ENCODE measurements at regions of chr12 and their contacts with region 1.

Region 1: GRCh38 chr12:54032627-54033100 is at the start of gene HOXC5:
- DNase-seq: peak; percentile 87 to 92
- ATAC-seq: peak; percentile 40 to 59
- H3K4me3 ChIP-seq: peak within 1 kb of the TSS; percentile 56
- H3K27ac ChIP-seq: peak within 1 kb of the TSS; percentile 76 to 93
- H3K4me1 ChIP-seq: peaks cover 18% of the 10 kb centered on the region
- CTCF ChIP-seq: peak; percentile 98
- EP300 ChIP-seq: no peak
- POLR2A ChIP-seq: no peak
- RAD21 ChIP-seq: peak; percentile 92 to 94
- polyA plus RNA-seq, gene HOXC5: 0.41 and 0.49 TPM in 2 replicates

Region 2: DNA sequence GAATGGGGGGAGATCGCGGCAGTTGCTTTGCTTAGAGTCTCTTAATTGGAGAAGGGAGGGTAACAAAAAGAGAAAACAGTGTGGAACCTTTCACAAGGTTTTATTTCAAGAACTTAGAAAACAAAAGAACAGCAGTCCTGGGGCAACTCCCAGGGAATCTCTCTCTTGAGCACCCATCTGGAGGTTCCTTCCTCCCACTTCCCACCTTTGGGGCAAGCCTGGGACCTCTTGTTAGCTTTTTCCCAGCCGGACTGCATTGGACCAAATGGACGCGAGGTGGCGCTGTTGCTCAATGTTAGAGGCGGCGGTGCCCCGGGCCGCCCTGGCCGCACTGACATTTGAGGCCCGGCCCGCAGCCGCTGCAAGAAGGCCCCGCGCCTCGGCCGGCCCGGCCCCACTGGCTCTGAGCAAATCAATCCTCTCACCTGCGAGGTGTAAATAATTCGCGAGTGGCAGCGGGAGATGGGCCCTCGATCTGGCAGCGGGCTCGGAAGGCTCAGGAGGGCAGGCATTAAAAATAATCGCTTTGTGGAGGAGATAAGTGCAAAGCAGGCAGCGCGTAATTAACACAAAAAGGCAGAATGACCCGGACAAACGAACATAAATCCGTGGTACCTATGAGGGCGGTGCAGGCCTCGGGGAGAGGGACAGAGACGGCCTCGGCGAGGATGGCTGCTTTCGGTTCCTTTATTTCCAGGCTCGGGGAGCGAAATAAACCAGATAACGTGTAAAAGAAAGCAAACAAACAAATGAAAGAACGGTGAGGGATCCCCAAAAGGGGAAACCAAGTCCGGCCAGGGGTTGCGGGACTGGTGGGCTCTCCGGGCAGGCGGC is 26.6 kb before region 1 on chr12:
- CTCF ChIA-PET with region 1: interaction called, 66 read pairs
- POLR2A ChIA-PET with region 1: interaction called, 6 read pairs
- DNase-seq: peak; percentile 82 to 86
- ATAC-seq: peak; percentile 59 to 82
- H3K4me3 ChIP-seq: no peak overlapping the region
- H3K27ac ChIP-seq: peak overlapping the region in 1 of 2 experiments; percentile 74; a peak in 3 of 6 replicates
- H3K4me1 ChIP-seq: peaks cover 19% of the 10 kb centered on the region
- CTCF ChIP-seq: peak; percentile 93
- EP300 ChIP-seq: no peak
- POLR2A ChIP-seq: no peak
- RAD21 ChIP-seq: peak; percentile 97 to 98

Region 3: DNA sequence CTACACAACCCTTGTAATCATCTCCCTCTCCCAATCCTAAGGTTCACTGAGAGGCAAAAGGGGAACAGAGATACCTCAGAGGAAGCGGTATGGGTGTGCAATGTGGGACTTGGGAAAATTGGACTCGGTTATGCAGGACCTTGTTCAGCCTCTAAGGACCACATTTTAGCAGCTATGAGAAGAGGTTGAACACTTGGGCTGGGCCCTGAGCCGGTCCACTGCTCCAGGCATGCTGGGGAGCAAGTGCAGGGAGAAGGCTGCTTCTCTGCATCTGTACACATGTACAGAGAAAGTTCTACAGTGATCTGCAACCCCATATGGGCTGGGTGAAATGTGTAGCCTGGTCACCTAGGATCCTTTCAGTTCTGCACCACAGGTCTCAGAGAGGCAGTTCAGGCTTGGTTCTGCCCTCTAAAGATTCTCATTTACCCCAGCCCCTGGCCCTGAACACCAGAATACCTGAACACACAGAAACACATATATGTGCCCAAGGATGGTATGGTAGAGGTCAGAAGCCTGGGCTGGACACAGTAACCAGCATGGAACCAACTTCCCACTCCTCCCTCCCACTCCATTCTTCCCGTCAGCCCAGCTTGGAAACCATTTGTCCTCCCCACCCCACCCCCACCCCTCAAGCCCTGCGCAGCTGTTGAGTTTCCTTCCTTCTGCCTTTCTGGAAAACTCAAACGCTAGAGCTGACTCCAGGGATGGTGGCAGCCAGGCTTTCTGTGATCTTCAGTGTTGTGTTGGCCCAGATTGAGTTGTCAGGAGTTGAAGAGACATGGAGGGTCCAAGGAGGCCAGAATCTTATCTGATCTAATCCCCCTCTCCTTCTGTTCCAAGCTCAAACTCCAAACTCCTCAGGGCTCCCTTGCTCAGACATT is 10.5 kb after region 1 on chr12:
- CTCF ChIA-PET with region 1: interaction called, 18 read pairs
- POLR2A ChIA-PET with region 1: interaction called, 7 read pairs
- DNase-seq: no peak
- ATAC-seq: no peak
- H3K4me3 ChIP-seq: no peak overlapping the region
- H3K27ac ChIP-seq: no peak overlapping the region
- H3K4me1 ChIP-seq: no peaks in the 10 kb centered on the region
- CTCF ChIP-seq: no peak
- EP300 ChIP-seq: no peak
- POLR2A ChIP-seq: no peak
- RAD21 ChIP-seq: no peak

Region 4: DNA sequence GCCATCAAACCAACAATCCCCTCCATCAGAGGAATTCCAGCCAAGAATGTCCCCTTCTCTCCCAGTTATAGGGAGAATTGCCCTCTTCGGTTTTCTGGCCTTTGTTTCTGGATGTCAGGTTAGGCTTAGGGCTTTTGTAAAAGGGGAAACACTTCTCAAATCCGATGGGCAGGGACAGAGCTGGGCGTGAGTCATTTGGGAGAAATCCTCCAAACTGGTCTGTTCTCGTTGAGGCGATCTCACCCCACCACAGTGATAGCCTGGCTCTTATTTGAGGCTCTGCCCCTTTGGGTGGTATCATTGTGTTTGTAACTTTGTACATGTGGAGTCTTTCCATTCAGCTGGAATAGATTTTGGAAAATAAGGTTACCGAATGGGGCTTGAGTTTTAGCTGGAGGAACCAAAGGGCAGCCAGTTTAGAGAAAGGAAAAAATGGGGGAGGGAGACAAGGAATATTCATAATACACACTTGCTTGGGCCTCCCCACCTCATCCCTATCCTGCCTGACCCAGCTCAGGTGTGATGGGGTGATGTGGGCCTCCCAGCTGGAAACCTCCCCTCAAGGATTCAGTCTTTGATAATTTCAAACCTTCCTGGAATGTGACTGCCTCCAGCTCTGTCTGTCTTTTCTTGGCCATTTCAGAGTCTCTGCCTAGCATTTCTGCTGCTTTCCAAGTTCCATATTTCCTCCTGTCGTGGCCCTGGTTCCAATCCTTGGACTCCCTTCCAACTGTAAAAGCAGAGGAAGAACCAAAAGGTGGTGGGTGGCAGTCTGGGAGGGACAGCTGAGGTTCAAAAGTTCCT is 28.5 kb after region 1 on chr12:
- CTCF ChIA-PET with region 1: interaction called, 17 read pairs
- POLR2A ChIA-PET with region 1: no interaction called
- DNase-seq: no peak
- ATAC-seq: no peak
- H3K4me3 ChIP-seq: no peak overlapping the region
- H3K27ac ChIP-seq: no peak overlapping the region
- H3K4me1 ChIP-seq: no peaks in the 10 kb centered on the region
- CTCF ChIP-seq: no peak
- EP300 ChIP-seq: no peak
- POLR2A ChIP-seq: no peak
- RAD21 ChIP-seq: no peak

Region 5: GRCh38 chr12:54207484-54208294 is 175.0 kb after region 1 on chr12:
- CTCF ChIA-PET with region 1: interaction called, 476 read pairs
- POLR2A ChIA-PET with region 1: interaction called, 8 read pairs
- DNase-seq: peak; percentile 80 to 81
- ATAC-seq: peak; percentile 81 to 95
- H3K4me3 ChIP-seq: no peak overlapping the region
- H3K27ac ChIP-seq: no peak overlapping the region
- H3K4me1 ChIP-seq: no peaks in the 10 kb centered on the region
- CTCF ChIP-seq: peak; percentile 81
- EP300 ChIP-seq: no peak
- POLR2A ChIP-seq: no peak
- RAD21 ChIP-seq: peak; percentile 83 to 92

Region 6: DNA sequence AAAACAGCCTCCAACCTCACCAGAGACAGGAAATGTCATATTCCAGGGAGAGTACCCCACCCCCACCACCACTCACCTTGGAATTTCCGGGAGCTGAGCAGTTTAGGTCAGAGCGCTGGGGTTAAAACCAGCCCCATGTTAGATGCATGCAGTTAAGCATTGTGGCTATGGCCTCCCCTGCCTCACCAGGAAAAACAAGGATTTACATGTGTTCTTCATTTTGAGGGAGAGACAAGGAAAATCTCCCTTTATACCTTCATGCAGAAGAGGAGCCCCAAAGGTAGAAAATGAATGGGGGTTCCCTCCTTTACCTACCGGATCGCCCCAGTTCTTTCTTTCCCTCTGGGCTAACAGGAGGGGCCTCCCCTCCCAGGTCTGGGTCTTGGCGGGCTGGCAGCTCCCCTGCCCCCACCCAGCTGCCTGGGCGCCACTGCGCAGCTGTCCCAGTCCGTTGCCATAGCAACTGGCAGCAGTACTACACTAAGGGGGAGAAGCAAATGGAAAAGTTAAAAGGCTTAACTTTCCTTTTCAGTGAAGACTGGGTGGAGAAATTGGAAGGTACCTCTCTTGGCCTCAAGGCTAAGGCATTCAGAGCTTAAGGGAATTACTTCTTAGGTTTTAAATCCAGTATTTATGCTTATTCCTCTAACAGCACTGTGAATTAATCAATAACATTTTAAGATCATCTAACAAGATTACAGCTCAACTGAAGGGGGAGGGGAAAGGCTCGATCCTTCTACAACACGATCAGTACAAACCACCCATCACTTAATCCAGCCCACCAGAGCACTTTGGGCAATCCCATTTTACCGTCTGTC is 226.7 kb after region 1 on chr12:
- CTCF ChIA-PET with region 1: no interaction called
- POLR2A ChIA-PET with region 1: no interaction called
- DNase-seq: peak; percentile 91 to 95
- ATAC-seq: peak; percentile 92 to 94
- H3K4me3 ChIP-seq: peak overlapping the region; percentile 34
- H3K27ac ChIP-seq: peak overlapping the region; percentile 79 to 95
- H3K4me1 ChIP-seq: peaks cover 55% of the 10 kb centered on the region
- CTCF ChIP-seq: no peak
- EP300 ChIP-seq: no peak
- POLR2A ChIP-seq: no peak
- RAD21 ChIP-seq: no peak

Measured in A549 (cell line).